ENCODE measurements at regions of chr9 and their contacts with region 1.

Region 1: GRCh38 chr9:89410641-89411350 is 87.1 kb downstream of the SEMA4D start:
- DNase-seq: no peak
- H3K4me3 Mint-ChIP-seq: peak overlapping the region; percentile 64
- H3K27ac Mint-ChIP-seq: peak overlapping the region; percentile 95
- H3K4me1 Mint-ChIP-seq: peaks cover 84% of the 10 kb centered on the region
- H3K27me3 Mint-ChIP-seq: no peaks in the 10 kb centered on the region

Region 2: DNA sequence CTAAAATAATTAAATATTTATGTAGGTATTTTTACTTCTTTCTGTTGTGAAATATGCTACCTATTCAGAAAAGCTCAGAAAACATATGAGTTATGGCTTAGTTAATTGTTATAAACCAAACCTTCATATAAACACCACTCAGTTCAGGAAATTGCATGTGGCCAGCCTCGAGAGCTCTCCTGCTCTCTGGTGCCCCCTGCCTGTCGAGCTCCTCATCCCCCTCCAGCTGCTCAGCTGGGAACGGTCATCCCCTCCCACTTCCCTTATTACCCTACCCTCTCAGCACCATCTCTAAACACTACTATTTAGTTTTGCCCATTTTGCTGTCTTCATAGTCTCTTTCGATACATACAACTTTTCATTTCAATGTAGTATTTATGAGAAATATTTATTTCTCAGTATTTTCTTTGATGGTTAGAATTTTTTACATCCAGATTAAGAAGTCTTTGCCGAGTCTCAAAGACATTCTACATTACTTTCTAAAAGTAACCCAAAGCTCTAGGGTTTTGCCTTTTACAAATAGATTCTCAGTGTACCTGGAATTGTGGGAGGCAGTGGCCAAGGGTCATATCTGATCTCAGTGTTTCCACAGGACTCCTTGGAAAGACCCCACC is 138.3 kb after region 1 on chr9:
- intact Hi-C with region 1: loop called (anchors 1 kb)
- DNase-seq: peak; percentile 76
- H3K4me3 Mint-ChIP-seq: no peak overlapping the region
- H3K27ac Mint-ChIP-seq: peak overlapping the region; percentile 5
- H3K4me1 Mint-ChIP-seq: peaks cover 23% of the 10 kb centered on the region
- H3K27me3 Mint-ChIP-seq: peaks cover 7% of the 10 kb centered on the region

Region 3: GRCh38 chr9:89591274-89592212 is 180.7 kb after region 1 on chr9:
- intact Hi-C with region 1: no loop called
- DNase-seq: no peak
- H3K4me3 Mint-ChIP-seq: no peak overlapping the region
- H3K27ac Mint-ChIP-seq: no peak overlapping the region
- H3K4me1 Mint-ChIP-seq: no peaks in the 10 kb centered on the region
- H3K27me3 Mint-ChIP-seq: peaks cover 48% of the 10 kb centered on the region

Measured in activated T-helper 2 cell treated with anti-CD3 and anti-CD28 coated beads, Interferon-gamma antibody, Interleukin-2, Interleukin-4, amounts not matched to agents 10 μg/mL and 5 μg/mL and 100 μg/mL, durations not matched to agents 14 hours and 24 hours and 36 hours (primary cell).